ENCODE measurements at regions of chr5 and their contacts with region 1.

Region 1: DNA sequence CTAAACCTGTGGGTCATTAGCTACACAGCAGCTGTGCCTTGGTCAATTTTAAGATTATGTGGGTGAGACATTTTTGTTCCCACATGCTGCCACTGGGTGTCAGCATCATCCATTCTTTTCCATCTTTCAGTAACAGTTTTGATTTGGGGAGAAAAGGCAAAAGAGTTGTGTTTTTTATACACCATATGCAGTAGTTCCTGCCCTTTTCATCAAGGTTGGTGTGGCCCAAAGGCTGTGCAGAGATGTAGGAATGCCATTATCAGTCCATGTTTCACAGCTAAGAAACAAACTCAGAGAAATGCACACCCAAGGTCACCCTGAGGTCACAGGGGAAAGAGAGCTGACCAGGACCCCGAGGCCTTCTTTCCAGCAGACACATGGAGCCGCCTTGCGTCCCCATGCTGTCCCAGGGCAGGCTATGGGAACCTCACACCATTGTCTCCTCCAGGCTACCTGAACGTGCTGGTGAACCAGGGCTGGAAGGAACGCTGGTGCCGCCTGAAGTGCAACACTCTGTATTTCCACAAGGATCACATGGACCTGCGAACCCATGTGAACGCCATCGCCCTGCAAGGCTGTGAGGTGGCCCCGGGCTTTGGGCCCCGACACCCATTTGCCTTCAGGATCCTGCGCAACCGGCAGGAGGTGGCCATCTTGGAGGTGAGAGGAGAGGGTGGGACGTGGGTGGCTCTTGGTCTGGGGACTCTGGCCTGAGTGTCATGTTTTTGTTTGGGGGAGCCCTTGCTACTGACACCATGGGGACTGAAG is 27.8 kb upstream of the GRPEL2 start:
- DNase-seq: peak in 1 of 2 experiments; percentile 34
- H3K4me3 ChIP-seq: no peak overlapping the region
- H3K27ac ChIP-seq: no peak overlapping the region
- H3K4me1 ChIP-seq: peaks cover 3% of the 10 kb centered on the region; the same call in 1 of the 2 replicates
- H3K27me3 ChIP-seq: no peaks in the 10 kb centered on the region
- CTCF ChIP-seq: peak; percentile 79

Region 2: DNA sequence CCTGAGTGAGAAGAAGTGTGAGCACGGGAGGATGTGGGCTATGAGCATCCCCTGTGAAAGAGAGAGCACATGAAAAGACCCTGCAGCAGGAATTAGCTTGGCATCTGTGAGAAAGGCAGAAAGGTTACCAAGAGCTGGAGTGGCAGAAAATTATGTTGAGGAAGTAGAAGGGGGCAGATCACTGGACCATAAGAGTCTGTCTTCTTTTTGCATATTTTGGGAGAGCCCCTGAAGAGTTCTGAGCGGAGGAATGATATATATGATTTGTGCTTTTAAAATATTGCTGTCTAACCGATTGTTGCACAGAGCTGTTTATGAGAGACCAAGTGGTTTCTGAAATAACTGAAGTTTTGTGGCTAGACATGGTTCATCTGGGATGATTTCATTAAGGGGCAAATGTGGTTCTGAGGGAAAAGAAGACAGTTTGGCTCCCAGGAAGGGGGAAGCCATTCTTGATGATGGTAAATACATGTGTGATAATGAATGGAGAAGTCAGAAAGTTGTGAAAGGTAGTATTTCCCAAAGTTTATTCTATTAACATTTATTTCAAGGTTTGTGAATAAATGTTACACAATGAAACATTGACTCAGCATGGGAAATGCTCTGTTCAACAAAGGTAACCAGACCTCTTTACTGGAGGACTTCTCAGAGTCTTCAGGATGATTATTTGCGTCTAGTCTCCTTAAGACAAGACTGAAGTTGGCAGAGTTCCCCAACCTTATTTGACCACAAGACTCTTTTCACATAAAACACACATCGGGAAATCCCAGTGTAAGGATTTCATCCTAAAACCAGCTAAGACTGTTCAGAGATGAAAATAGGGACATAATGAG is 522.5 kb before region 1 on chr5:
- CTCF ChIA-PET with region 1: no interaction called
- POLR2A ChIA-PET with region 1: no interaction called
- intact Hi-C with region 1: no loop called
- DNase-seq: no peak
- H3K4me3 ChIP-seq: no peak overlapping the region
- H3K27ac ChIP-seq: no peak overlapping the region
- H3K4me1 ChIP-seq: no peaks in the 10 kb centered on the region
- H3K27me3 ChIP-seq: no peaks in the 10 kb centered on the region
- CTCF ChIP-seq: no peak

Region 3: GRCh38 chr5:148826053-148826738 is 491.3 kb before region 1 on chr5 and contains the start of gene ADRB2:
- CTCF ChIA-PET with region 1: no interaction called
- POLR2A ChIA-PET with region 1: no interaction called
- intact Hi-C with region 1: no loop called
- DNase-seq: peak; percentile 90 to 98
- H3K4me3 ChIP-seq: peak within 1 kb of the TSS; percentile 63
- H3K27ac ChIP-seq: peak within 1 kb of the TSS; percentile 68
- H3K4me1 ChIP-seq: peaks cover 24% of the 10 kb centered on the region
- H3K27me3 ChIP-seq: no peaks in the 10 kb centered on the region
- CTCF ChIP-seq: no peak
- total RNA-seq, gene ADRB2: 2.8 and 3.1 TPM in 2 replicates

Region 4: GRCh38 chr5:149357370-149358293 is 40.2 kb after region 1 on chr5 and contains the start of gene PCYOX1L:
- CTCF ChIA-PET with region 1: interaction called, 3 read pairs
- POLR2A ChIA-PET with region 1: interaction called, 5 read pairs
- intact Hi-C with region 1: loop called (anchors 5 kb)
- DNase-seq: peak; percentile 88 to 96
- H3K4me3 ChIP-seq: peak within 1 kb of the TSS; percentile 86
- H3K27ac ChIP-seq: no peak within 1 kb of the TSS
- H3K4me1 ChIP-seq: peaks cover 14% of the 10 kb centered on the region; the same call in 1 of the 2 replicates
- H3K27me3 ChIP-seq: no peaks in the 10 kb centered on the region
- CTCF ChIP-seq: no peak
- total RNA-seq, gene PCYOX1L: 7.4 and 8.3 TPM in 2 replicates

Region 5: GRCh38 chr5:149636851-149637246 is 319.4 kb after region 1 on chr5:
- CTCF ChIA-PET with region 1: no interaction called
- POLR2A ChIA-PET with region 1: no interaction called
- intact Hi-C with region 1: no loop called
- DNase-seq: peak in 1 of 2 experiments; percentile 35
- H3K4me3 ChIP-seq: no peak overlapping the region
- H3K27ac ChIP-seq: no peak overlapping the region
- H3K4me1 ChIP-seq: peaks cover 21% of the 10 kb centered on the region
- H3K27me3 ChIP-seq: no peaks in the 10 kb centered on the region
- CTCF ChIP-seq: peak; percentile 88